ENCODE measurements at regions of chr7 and their contacts with region 1.

Region 1: DNA sequence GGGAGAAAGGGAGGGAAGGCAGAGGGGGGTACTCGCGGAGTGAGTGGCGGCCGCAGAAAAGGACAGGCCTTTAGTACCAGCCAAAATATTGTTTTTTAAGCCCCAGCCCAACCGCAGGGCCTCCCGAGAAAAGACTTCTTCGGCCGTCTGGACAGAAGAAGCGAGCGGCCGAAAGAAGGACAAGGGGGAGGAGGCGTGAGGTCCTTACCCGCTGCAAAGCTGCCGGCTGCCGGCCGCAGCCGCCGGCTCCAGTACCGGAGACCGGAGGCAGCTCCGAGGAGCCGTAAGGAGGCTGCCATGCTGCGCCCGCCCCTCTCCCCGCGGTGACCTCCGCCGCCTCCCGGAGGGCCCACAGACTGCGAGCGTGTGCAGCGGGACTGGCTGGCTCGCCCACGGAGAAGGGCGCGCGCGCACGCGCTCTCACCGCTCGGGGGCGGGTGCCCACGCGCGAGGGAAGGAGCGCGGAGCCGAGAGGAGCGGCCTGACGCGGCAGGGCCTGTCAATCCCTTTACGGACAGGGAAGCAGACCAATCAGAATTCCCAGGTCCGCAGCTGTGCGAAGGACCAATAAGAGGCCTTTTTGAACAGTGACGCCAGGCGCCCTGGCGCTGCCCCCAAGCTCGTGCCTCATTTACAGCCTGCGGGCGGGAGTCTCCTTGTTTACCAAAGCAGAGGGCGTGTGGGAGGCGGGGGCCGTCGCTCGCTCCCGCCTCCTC is at the start of gene HIBADH:
- DNase-seq: peak; percentile 89 to 99 (median 95)
- ATAC-seq: peak; percentile 94
- H3K4me3 ChIP-seq: peak within 1 kb of the TSS; percentile 98
- H3K4me3 Mint-ChIP-seq: peak within 1 kb of the TSS; percentile 93
- H3K27ac ChIP-seq: peak within 1 kb of the TSS; percentile 50 to 83
- H3K27ac Mint-ChIP-seq: peak within 1 kb of the TSS; percentile 99
- H3K4me1 ChIP-seq: peaks cover 16% of the 10 kb centered on the region
- H3K4me1 Mint-ChIP-seq: peaks cover 20% of the 10 kb centered on the region
- H3K27me3 ChIP-seq: no peaks in the 10 kb centered on the region
- H3K27me3 Mint-ChIP-seq: no peaks in the 10 kb centered on the region
- CTCF ChIP-seq: peak; percentile 19
- total RNA-seq, gene HIBADH: 6.3 to 8.4 TPM

Region 2: GRCh38 chr7:26441002-26441521 is 1221.6 kb before region 1 on chr7:
- CTCF ChIA-PET with region 1: no interaction called
- POLR2A ChIA-PET with region 1: no interaction called
- intact Hi-C with region 1: no loop called
- DNase-seq: no peak
- ATAC-seq: no peak
- H3K4me3 ChIP-seq: no peak overlapping the region
- H3K4me3 Mint-ChIP-seq: no peak overlapping the region
- H3K27ac ChIP-seq: no peak overlapping the region
- H3K27ac Mint-ChIP-seq: no peak overlapping the region
- H3K4me1 ChIP-seq: no peaks in the 10 kb centered on the region
- H3K4me1 Mint-ChIP-seq: no peaks in the 10 kb centered on the region
- H3K27me3 ChIP-seq: peaks cover 0 to 5% of the 10 kb centered on the region in 2 experiments
- H3K27me3 Mint-ChIP-seq: peaks cover 9% of the 10 kb centered on the region
- CTCF ChIP-seq: no peak

Region 3: GRCh38 chr7:27546616-27547015 is 116.0 kb before region 1 on chr7:
- CTCF ChIA-PET with region 1: no interaction called
- POLR2A ChIA-PET with region 1: no interaction called
- intact Hi-C with region 1: no loop called
- DNase-seq: no peak
- ATAC-seq: no peak
- H3K4me3 ChIP-seq: no peak overlapping the region
- H3K4me3 Mint-ChIP-seq: no peak overlapping the region
- H3K27ac ChIP-seq: no peak overlapping the region
- H3K27ac Mint-ChIP-seq: no peak overlapping the region
- H3K4me1 ChIP-seq: no peaks in the 10 kb centered on the region
- H3K4me1 Mint-ChIP-seq: no peaks in the 10 kb centered on the region
- H3K27me3 ChIP-seq: no peaks in the 10 kb centered on the region
- H3K27me3 Mint-ChIP-seq: no peaks in the 10 kb centered on the region
- CTCF ChIP-seq: no peak

Region 4: GRCh38 chr7:27640914-27641580 is 21.6 kb before region 1 on chr7:
- CTCF ChIA-PET with region 1: no interaction called
- POLR2A ChIA-PET with region 1: interaction called, 11 read pairs
- intact Hi-C with region 1: no loop called
- DNase-seq: no peak
- ATAC-seq: no peak
- H3K4me3 ChIP-seq: no peak overlapping the region
- H3K4me3 Mint-ChIP-seq: no peak overlapping the region
- H3K27ac ChIP-seq: no peak overlapping the region
- H3K27ac Mint-ChIP-seq: no peak overlapping the region
- H3K4me1 ChIP-seq: no peaks in the 10 kb centered on the region
- H3K4me1 Mint-ChIP-seq: peaks cover 34% of the 10 kb centered on the region
- H3K27me3 ChIP-seq: no peaks in the 10 kb centered on the region
- H3K27me3 Mint-ChIP-seq: no peaks in the 10 kb centered on the region
- CTCF ChIP-seq: no peak

Region 5: GRCh38 chr7:27739909-27740448 is 77.3 kb after region 1 on chr7 and contains the start of gene TAX1BP1:
- CTCF ChIA-PET with region 1: interaction called, 9 read pairs
- POLR2A ChIA-PET with region 1: interaction called, 116 read pairs
- intact Hi-C with region 1: loop called (anchors 1 kb)
- DNase-seq: peak; percentile 89 to 98 (median 94)
- ATAC-seq: peak; percentile 91
- H3K4me3 ChIP-seq: peak within 1 kb of the TSS; percentile 88
- H3K4me3 Mint-ChIP-seq: peak within 1 kb of the TSS; percentile 99
- H3K27ac ChIP-seq: peak within 1 kb of the TSS; percentile 98 to 99
- H3K27ac Mint-ChIP-seq: peak within 1 kb of the TSS; percentile 98
- H3K4me1 ChIP-seq: peaks cover 13% of the 10 kb centered on the region
- H3K4me1 Mint-ChIP-seq: peaks cover 53% of the 10 kb centered on the region
- H3K27me3 ChIP-seq: no peaks in the 10 kb centered on the region
- H3K27me3 Mint-ChIP-seq: no peaks in the 10 kb centered on the region
- CTCF ChIP-seq: no peak
- total RNA-seq, gene TAX1BP1: 115 TPM

Region 6: GRCh38 chr7:28179120-28180030 is 516.7 kb after region 1 on chr7:
- CTCF ChIA-PET with region 1: no interaction called
- POLR2A ChIA-PET with region 1: no interaction called
- intact Hi-C with region 1: loop called in 1 of 2 experiments (anchors 5 kb)
- DNase-seq: peak; percentile 52 to 89 (median 74)
- ATAC-seq: peak; percentile 65
- H3K4me3 ChIP-seq: peak overlapping the region; percentile 52
- H3K4me3 Mint-ChIP-seq: peak overlapping the region; percentile 83
- H3K27ac ChIP-seq: no peak overlapping the region
- H3K27ac Mint-ChIP-seq: peak overlapping the region; percentile 81
- H3K4me1 ChIP-seq: peaks cover 15% of the 10 kb centered on the region
- H3K4me1 Mint-ChIP-seq: peaks cover 22% of the 10 kb centered on the region
- H3K27me3 ChIP-seq: no peaks in the 10 kb centered on the region
- H3K27me3 Mint-ChIP-seq: no peaks in the 10 kb centered on the region
- CTCF ChIP-seq: no peak

Measured in CD4-positive, alpha-beta T cell (primary cell).